A549 (cell line): ENCODE measurements at regions of chr3 and their contacts with region 1.

Region 1: DNA sequence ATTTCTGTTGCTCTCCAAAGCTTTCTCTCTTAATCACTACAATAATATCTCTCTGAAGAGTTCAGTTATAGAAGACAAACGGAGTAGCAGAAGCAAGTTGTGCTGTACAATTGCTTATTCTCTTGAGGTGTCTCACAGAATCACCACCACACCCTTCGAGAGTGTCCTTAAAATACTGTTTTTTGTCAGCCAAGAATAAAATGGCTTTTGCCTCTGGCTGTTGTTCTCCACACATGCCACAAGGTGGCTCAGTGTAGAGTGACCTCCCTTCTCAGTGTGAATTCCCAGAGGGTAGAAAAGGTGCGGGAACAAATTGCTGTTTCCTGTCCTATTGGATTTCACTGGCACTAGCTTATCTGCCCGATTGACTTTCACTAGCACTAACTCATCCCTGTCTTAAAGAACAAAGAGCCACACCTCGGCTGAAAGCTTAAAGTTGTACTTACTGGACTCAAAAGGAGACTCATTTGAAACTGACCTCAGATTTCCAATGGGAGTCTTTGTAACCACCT is 134.2 kb upstream of the SATB1 start:
- DNase-seq: peak; percentile 7 to 42
- ATAC-seq: peak; percentile 68 to 75; a peak in 4 of 6 replicates
- H3K4me3 ChIP-seq: no peak overlapping the region
- H3K27ac ChIP-seq: no peak overlapping the region
- H3K4me1 ChIP-seq: no peaks in the 10 kb centered on the region
- CTCF ChIP-seq: peak; percentile 40
- EP300 ChIP-seq: no peak
- POLR2A ChIP-seq: no peak
- RAD21 ChIP-seq: peak; percentile 36 to 47; a peak in 4 of 5 replicates

Region 2: DNA sequence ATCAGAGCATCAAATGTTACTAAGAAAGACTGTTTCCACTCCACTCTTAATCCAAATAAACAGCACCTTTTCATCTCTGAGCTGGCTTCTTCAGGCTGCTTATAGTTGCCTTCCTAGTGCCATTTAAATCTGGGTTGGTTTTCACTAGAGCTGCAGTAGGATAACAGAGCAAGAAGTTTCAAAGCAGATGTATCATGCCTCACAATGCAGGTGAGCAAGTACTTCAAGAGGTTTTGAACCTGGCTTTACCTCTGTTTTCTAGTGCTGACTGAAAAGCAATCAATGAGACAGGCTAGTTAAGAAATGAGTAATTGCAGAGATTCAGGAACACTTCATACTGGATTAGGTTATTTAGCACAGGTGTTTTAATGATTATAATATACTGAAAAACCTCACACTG is 13.4 kb after region 1 on chr3:
- CTCF ChIA-PET with region 1: interaction called, 12 read pairs
- POLR2A ChIA-PET with region 1: no interaction called
- DNase-seq: no peak
- ATAC-seq: no peak
- H3K4me3 ChIP-seq: no peak overlapping the region
- H3K27ac ChIP-seq: no peak overlapping the region
- H3K4me1 ChIP-seq: no peaks in the 10 kb centered on the region
- CTCF ChIP-seq: no peak
- EP300 ChIP-seq: no peak
- POLR2A ChIP-seq: no peak
- RAD21 ChIP-seq: no peak

Region 3: DNA sequence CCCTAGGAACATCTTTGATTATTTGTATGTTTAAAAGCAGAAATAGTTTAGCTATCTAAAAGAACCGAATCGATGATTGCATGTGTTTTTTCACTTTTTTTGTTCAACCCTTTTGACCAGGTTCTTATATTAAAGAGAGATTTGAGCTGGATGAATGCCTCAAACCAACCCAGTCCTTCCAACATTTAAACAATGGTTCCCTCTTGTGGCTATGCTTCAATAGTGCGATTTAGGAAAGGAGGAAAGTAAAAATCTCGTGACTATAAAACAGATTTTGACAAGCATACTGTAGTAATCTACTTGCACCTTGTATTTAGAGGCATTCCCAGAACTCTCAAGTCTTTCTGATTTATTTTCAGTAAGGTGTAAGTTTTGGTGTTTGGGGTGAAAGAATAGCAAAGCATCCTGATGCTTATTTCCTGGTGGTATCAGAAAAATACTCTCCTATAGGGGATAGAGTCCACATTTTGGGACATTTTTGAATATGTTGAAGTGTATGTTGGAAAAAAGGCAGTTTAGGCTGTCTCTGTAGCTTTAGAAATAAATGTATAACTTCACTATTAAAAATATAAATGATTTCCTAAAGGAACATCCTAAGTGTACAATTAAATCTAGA is 429.3 kb after region 1 on chr3:
- CTCF ChIA-PET with region 1: interaction called, 15 read pairs
- POLR2A ChIA-PET with region 1: no interaction called
- DNase-seq: peak; percentile 7 to 38
- ATAC-seq: peak; percentile 74 to 76; a peak in 5 of 6 replicates
- H3K4me3 ChIP-seq: no peak overlapping the region
- H3K27ac ChIP-seq: no peak overlapping the region
- H3K4me1 ChIP-seq: no peaks in the 10 kb centered on the region
- CTCF ChIP-seq: peak; percentile 50
- EP300 ChIP-seq: no peak
- POLR2A ChIP-seq: no peak
- RAD21 ChIP-seq: peak in 1 of 2 experiments; percentile 66